ENCODE measurements at regions of chrX and their contacts with region 1.

Region 1: GRCh38 chrX:153507484-153508178 is 9.8 kb upstream of the ATP2B3 start:
- DNase-seq: peak; percentile 89
- CTCF ChIP-seq: peak; percentile 70

Region 2: DNA sequence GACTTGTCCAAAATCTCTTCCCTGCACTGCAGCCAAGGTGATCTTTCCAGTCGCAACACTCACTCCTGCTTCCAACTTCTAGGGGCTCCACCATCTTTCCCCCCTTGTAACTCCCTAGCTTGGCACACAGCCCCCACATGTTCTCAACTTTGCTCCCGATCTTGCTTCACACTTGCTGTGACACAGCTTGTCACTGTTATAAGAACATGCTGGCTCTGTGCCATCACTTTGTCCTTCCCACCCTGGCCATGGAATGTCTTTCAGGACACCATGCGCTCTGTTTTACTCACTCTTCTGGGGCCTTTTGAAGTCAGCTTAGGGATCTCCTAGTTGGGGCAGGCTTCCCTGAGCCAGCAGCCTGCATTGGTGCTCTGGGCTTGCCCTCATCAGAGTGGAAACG is 674.3 kb before region 1 on chrX:
- CTCF ChIA-PET with region 1: no interaction called
- POLR2A ChIA-PET with region 1: no interaction called
- DNase-seq: no peak
- CTCF ChIP-seq: no peak

Region 3: DNA sequence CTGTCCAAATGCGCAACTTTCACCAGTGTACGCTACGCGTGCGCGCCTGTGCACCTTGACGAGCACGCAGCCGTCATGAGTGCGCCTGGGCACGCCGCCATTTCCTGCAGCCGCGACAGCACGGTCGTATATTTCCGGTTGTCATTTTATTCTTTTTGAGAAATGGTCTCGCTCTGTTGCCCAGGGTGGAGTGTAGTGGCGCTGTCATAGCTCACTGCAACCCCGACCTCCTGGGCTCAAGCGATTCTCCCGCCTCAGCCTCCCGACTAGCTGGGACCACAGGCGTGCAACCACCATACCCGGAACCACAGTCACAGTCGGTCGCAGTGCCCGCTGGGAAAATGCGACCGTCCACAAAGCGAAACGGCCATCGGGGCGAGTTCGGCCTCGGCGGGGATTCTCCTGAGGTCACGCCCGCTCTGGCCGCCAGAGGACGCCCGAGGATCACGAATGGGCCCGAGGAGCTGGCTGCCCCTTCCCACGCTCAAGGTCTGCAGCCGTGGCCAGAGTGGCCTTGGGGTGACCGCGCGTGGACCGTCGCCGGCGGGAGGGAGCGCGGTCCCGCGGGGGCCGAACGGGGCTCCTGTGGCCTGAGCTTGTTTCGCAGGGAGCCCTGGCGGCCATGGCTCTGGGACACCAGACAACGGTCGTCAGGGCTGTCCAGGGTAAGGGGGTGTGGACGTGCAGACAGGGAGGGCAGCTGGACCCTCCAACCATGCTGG is 475.1 kb before region 1 on chrX:
- CTCF ChIA-PET with region 1: interaction called, 21 read pairs
- POLR2A ChIA-PET with region 1: no interaction called
- DNase-seq: peak; percentile 85
- CTCF ChIP-seq: peak; percentile 86

Region 4: GRCh38 chrX:153470435-153471363 is 36.9 kb before region 1 on chrX and contains the start of gene HAUS7:
- CTCF ChIA-PET with region 1: interaction called, 21 read pairs
- POLR2A ChIA-PET with region 1: no interaction called
- DNase-seq: peak; percentile 93
- CTCF ChIP-seq: peak; percentile 65

Region 5: GRCh38 chrX:153539171-153539978 is 31.7 kb after region 1 on chrX:
- CTCF ChIA-PET with region 1: interaction called, 10 read pairs
- POLR2A ChIA-PET with region 1: no interaction called
- DNase-seq: peak; percentile 77
- CTCF ChIP-seq: peak; percentile 79